Activated CD8-positive, alpha-beta T cell treated with anti-CD3 and anti-CD28 coated beads, Interleukin-2, amount 10 ng/mL, durations not matched to agents 7 days and 5 days (primary cell): ENCODE measurements at regions of chr17 and their contacts with region 1.

Region 1: GRCh38 chr17:8057691-8058114 is 18.8 kb downstream of the ALOX15B start:
- DNase-seq: peak; percentile 59
- ATAC-seq: peak; percentile 72
- H3K4me3 Mint-ChIP-seq: no peak overlapping the region
- H3K27ac Mint-ChIP-seq: no peak overlapping the region
- H3K4me1 Mint-ChIP-seq: peaks cover 32% of the 10 kb centered on the region
- H3K27me3 Mint-ChIP-seq: peaks cover 44% of the 10 kb centered on the region

Region 2: GRCh38 chr17:7997186-7997585 is 60.5 kb before region 1 on chr17:
- CTCF ChIA-PET with region 1: interaction called, 10 read pairs
- POLR2A ChIA-PET with region 1: no interaction called
- DNase-seq: peak; percentile 69
- ATAC-seq: peak; percentile 83
- H3K4me3 Mint-ChIP-seq: no peak overlapping the region
- H3K27ac Mint-ChIP-seq: no peak overlapping the region
- H3K4me1 Mint-ChIP-seq: peaks cover 12% of the 10 kb centered on the region
- H3K27me3 Mint-ChIP-seq: peaks cover 40% of the 10 kb centered on the region

Region 3: DNA sequence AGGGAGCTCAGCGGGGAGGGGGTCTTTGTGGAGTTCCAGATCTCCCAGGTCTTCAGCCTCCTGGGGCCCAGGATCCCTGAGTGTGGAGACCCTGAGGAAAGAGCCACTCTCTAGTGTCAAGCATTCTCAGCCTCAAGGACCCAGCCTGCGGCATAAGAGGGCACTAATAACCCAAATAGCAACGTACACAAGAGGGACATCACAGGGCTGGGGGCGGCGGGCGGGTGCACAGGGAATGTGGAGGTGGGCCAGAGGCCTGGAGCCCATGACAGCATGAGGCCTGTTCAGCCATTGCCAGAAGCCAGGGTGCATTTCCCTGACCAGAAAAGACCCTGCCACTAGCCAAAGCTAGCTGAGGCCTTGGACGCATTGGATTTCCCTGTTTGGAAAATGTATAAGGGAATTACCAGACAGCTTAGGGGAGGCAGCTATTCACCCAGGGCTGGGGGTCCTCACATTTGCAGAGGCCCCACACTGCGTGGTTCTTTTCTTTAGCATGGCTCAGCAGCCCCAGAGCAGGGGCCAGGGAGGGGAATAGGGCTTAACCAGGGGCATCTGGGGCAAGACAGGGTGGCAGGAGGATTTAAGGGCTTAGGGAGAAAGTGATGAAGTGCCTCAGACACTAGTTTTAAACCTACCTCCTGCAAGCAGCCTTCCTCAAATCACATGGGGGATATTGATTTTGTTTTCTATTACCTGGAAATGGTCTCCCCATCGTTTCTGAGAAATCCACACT is 32.4 kb before region 1 on chr17:
- CTCF ChIA-PET with region 1: interaction called, 10 read pairs
- POLR2A ChIA-PET with region 1: no interaction called
- DNase-seq: no peak
- ATAC-seq: no peak
- H3K4me3 Mint-ChIP-seq: no peak overlapping the region
- H3K27ac Mint-ChIP-seq: no peak overlapping the region
- H3K4me1 Mint-ChIP-seq: no peaks in the 10 kb centered on the region
- H3K27me3 Mint-ChIP-seq: peaks cover 24% of the 10 kb centered on the region

Region 4: GRCh38 chr17:8079291-8080207 is 21.8 kb after region 1 on chr17:
- CTCF ChIA-PET with region 1: interaction called, 319 read pairs
- POLR2A ChIA-PET with region 1: no interaction called
- DNase-seq: peak; percentile 85
- ATAC-seq: peak; percentile 87
- H3K4me3 Mint-ChIP-seq: peak overlapping the region; percentile 86
- H3K27ac Mint-ChIP-seq: peak overlapping the region; percentile 83
- H3K4me1 Mint-ChIP-seq: peaks cover 20% of the 10 kb centered on the region
- H3K27me3 Mint-ChIP-seq: peaks cover 16% of the 10 kb centered on the region

Region 5: DNA sequence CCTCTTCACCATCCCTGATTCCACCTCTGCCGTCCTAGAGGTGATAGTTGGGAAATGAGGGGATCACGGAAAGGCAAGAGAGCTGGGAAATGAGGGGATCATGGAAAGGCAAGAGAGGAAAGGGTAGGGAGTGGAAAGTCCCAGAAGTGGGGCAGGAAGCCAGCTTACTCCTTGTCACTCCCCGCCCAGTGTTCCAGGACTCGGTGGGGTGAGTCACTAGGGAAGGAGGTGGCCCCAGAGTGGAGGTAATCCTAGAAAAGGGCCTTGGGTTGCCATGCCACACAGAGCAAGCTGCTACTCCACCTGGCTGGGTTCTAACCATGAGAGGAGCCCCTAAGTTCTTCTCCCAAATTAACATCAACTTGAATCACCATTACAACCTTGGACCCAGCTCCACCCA is 45.8 kb after region 1 on chr17:
- CTCF ChIA-PET with region 1: interaction called, 115 read pairs
- POLR2A ChIA-PET with region 1: interaction called, 4 read pairs
- DNase-seq: no peak
- ATAC-seq: no peak
- H3K4me3 Mint-ChIP-seq: no peak overlapping the region
- H3K27ac Mint-ChIP-seq: no peak overlapping the region
- H3K4me1 Mint-ChIP-seq: peaks cover 6% of the 10 kb centered on the region
- H3K27me3 Mint-ChIP-seq: peaks cover 8% of the 10 kb centered on the region

Region 6: GRCh38 chr17:8366231-8366630 is 308.5 kb after region 1 on chr17:
- CTCF ChIA-PET with region 1: no interaction called
- POLR2A ChIA-PET with region 1: no interaction called
- DNase-seq: no peak
- ATAC-seq: no peak
- H3K4me3 Mint-ChIP-seq: no peak overlapping the region
- H3K27ac Mint-ChIP-seq: no peak overlapping the region
- H3K4me1 Mint-ChIP-seq: peaks cover 8% of the 10 kb centered on the region
- H3K27me3 Mint-ChIP-seq: no peaks in the 10 kb centered on the region